IMR-90 (cell line): ENCODE measurements at regions of chr9 and their contacts with region 1.

Region 1: GRCh38 chr9:26946753-26947727 is at the start of gene PLAA:
- DNase-seq: peak; percentile 92
- ATAC-seq: peak; percentile 97
- H3K4me3 ChIP-seq: peak within 1 kb of the TSS; percentile 80
- H3K27ac ChIP-seq: peak within 1 kb of the TSS; percentile 100
- H3K4me1 ChIP-seq: peaks cover 2% of the 10 kb centered on the region; the same call in 1 of the 2 replicates
- H3K27me3 ChIP-seq: no peaks in the 10 kb centered on the region
- CTCF ChIP-seq: no peak
- POLR2A ChIP-seq: peak; percentile 74
- RAD21 ChIP-seq: no peak
- total RNA-seq, gene PLAA: 24.4 and 37.8 TPM in 2 replicates

Region 2: DNA sequence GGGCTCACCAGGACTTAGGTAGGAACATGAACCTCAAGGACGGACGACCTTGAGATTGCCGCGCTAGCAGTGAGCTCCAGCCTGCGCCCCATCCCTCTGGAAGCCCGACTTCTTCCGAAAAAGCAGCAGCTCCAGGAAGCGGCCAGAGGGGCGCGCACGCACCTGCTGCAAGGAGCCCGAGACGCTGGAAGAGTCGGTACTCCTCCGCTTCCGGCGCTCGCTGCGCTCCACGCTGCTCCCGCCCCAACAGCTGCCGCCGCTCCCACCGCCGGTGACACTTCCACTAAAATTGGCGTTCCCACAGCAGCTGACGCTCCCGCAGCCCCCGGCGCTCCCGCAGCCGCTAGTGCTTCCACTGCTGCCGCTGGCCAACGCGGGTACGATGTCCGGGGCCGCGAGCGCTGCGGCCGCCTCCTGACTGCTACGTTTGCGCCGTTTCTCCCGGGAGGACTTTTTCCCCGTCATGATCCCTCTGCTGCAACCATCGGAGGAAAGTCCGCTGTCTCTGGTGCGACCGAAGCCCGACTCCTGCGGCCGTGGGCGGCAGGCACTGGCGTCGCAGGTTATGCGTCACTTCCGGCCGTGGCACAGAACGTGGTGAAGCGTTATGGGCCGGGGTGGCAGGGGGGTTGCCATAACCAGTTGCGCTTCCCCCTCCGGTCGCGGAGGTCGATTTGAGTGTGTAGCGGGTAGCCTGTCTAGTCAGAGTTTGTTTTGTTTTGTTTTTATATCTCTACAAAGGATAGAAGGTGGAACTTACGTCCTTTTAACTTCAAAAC is 54.6 kb before region 1 on chr9 and contains the start of gene CAAP1:
- CTCF ChIA-PET with region 1: no interaction called
- POLR2A ChIA-PET with region 1: no interaction called
- dilution Hi-C with region 1: no loop called
- in situ Hi-C with region 1: no loop called
- intact Hi-C with region 1: loop called (anchors 2 kb)
- DNase-seq: peak; percentile 92
- ATAC-seq: peak; percentile 96
- H3K4me3 ChIP-seq: peak within 1 kb of the TSS; percentile 84
- H3K27ac ChIP-seq: peak within 1 kb of the TSS; percentile 81
- H3K4me1 ChIP-seq: no peaks in the 10 kb centered on the region
- H3K27me3 ChIP-seq: no peaks in the 10 kb centered on the region
- CTCF ChIP-seq: peak; percentile 49
- POLR2A ChIP-seq: peak; percentile 92
- RAD21 ChIP-seq: peak; percentile 49
- total RNA-seq, gene CAAP1: 6.1 and 12.2 TPM in 2 replicates

Region 3: GRCh38 chr9:27086818-27087680 is 140.0 kb after region 1 on chr9:
- CTCF ChIA-PET with region 1: no interaction called
- POLR2A ChIA-PET with region 1: no interaction called
- dilution Hi-C with region 1: no loop called
- in situ Hi-C with region 1: no loop called
- intact Hi-C with region 1: loop called (anchors 10 kb)
- DNase-seq: peak; percentile 90
- ATAC-seq: peak; percentile 78
- H3K4me3 ChIP-seq: peak overlapping the region; percentile 8; the same call in 1 of the 2 replicates
- H3K27ac ChIP-seq: peak overlapping the region; percentile 97
- H3K4me1 ChIP-seq: peaks cover 20% of the 10 kb centered on the region
- H3K27me3 ChIP-seq: no peaks in the 10 kb centered on the region
- CTCF ChIP-seq: no peak
- POLR2A ChIP-seq: peak; percentile 72; the same call in 1 of the 2 replicates
- RAD21 ChIP-seq: no peak; the same call in 1 of the 2 replicates

Region 4: DNA sequence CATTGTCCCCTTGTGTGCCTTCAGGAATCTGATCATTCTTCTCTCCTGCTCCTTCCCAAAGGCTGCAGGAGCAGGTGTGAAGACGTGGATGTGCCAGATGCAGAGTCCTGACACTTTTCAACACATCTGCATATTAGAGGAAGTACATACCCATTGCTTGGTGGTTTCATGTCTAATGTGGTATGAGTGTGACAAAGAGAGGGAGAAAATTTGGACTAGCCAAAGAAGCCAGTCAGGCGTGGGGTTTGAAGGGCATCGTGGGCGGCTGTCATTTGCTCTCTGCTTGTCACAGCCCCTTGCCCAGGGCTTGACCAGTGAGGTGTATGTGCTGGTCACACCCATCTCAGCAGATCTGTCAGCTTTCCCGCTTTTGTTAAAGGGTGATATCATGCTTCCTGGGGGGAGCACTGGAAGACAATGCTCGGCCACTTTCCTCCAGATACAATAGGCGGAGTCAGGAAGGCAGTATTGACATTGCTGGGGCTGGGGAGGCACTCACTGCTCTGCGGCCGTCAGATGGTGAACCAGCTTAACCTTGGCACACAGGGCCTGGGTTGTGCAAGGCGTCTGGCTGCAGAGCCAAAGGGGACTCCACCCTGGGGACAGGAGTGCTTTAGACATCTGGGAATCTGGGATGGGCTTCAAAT is 170.6 kb after region 1 on chr9:
- CTCF ChIA-PET with region 1: no interaction called
- POLR2A ChIA-PET with region 1: no interaction called
- dilution Hi-C with region 1: no loop called
- in situ Hi-C with region 1: no loop called
- intact Hi-C with region 1: loop called (anchors 10 kb)
- DNase-seq: no peak
- ATAC-seq: no peak
- H3K4me3 ChIP-seq: no peak overlapping the region
- H3K27ac ChIP-seq: peak overlapping the region; percentile 16; the same call in 1 of the 2 replicates
- H3K4me1 ChIP-seq: peaks cover 17% of the 10 kb centered on the region
- H3K27me3 ChIP-seq: no peaks in the 10 kb centered on the region
- CTCF ChIP-seq: no peak
- POLR2A ChIP-seq: no peak
- RAD21 ChIP-seq: no peak

Region 5: DNA sequence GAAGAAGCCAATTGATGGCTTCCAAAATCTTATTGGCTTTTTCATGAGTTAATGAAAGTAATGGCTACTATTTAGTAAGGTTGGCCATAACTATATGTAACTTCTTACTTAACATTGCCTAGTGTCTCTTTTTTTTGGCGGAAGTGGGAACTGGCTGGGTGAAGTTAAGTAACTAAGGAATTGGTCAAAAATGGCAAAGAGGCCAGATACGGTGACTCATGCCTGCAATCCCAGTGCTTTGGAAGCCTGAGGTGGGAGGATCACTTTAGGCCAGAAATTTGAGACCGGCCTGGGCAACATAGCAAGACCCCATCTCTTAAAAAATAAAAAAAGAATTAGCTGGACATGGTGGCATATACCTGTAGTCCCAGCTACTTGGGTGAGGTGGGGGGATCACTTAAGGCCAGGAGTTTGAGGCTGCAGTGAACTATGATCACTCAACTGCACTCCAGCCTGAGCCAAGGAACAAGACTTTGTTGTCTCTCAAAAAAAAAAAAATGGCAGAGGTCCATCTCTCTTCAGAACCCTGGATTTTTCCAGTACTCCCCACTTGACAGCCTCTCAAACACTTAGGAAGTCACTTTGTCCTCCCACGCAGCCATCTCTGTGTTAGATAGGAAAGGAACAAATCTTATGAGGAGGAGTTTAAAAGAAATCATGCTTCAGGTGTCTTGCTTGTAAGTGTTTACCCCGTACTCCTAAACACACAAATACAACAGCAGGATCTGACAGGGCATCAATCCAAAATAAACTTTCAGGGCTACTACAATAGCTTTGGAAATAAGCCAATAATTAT is 237.7 kb after region 1 on chr9:
- CTCF ChIA-PET with region 1: no interaction called
- POLR2A ChIA-PET with region 1: no interaction called
- dilution Hi-C with region 1: no loop called
- in situ Hi-C with region 1: no loop called
- intact Hi-C with region 1: loop called (anchors 10 kb)
- DNase-seq: no peak
- ATAC-seq: no peak
- H3K4me3 ChIP-seq: no peak overlapping the region
- H3K27ac ChIP-seq: no peak overlapping the region
- H3K4me1 ChIP-seq: peaks cover 19% of the 10 kb centered on the region
- H3K27me3 ChIP-seq: no peaks in the 10 kb centered on the region
- CTCF ChIP-seq: no peak
- POLR2A ChIP-seq: no peak
- RAD21 ChIP-seq: no peak

Region 6: GRCh38 chr9:27261517-27262211 is 314.6 kb after region 1 on chr9:
- CTCF ChIA-PET with region 1: no interaction called
- POLR2A ChIA-PET with region 1: interaction called, 17 read pairs
- dilution Hi-C with region 1: no loop called
- in situ Hi-C with region 1: no loop called
- intact Hi-C with region 1: no loop called
- DNase-seq: peak; percentile 17
- ATAC-seq: peak; percentile 64; the same call in 1 of the 2 replicates
- H3K4me3 ChIP-seq: no peak overlapping the region
- H3K27ac ChIP-seq: no peak overlapping the region
- H3K4me1 ChIP-seq: no peaks in the 10 kb centered on the region
- H3K27me3 ChIP-seq: peaks cover 11% of the 10 kb centered on the region
- CTCF ChIP-seq: no peak
- POLR2A ChIP-seq: no peak
- RAD21 ChIP-seq: no peak